Common myeloid progenitor, CD34-positive (primary cell): ENCODE measurements at regions of chr11 and their contacts with region 1.

Region 1: GRCh38 chr11:64304316-64305072 is 830 bp upstream of the ESRRA start:
- DNase-seq: peak; percentile 90 to 94 (median 91)
- H3K4me3 ChIP-seq: peak overlapping the region; percentile 52 to 92 (median 78)
- H3K27ac ChIP-seq: peak overlapping the region; percentile 40 to 82
- H3K4me1 ChIP-seq: peaks cover 7 to 44% (median 40%) of the 10 kb centered on the region in 4 experiments
- H3K27me3 ChIP-seq: peaks cover 0 to 20% (median 13%) of the 10 kb centered on the region in 5 experiments

Region 2: DNA sequence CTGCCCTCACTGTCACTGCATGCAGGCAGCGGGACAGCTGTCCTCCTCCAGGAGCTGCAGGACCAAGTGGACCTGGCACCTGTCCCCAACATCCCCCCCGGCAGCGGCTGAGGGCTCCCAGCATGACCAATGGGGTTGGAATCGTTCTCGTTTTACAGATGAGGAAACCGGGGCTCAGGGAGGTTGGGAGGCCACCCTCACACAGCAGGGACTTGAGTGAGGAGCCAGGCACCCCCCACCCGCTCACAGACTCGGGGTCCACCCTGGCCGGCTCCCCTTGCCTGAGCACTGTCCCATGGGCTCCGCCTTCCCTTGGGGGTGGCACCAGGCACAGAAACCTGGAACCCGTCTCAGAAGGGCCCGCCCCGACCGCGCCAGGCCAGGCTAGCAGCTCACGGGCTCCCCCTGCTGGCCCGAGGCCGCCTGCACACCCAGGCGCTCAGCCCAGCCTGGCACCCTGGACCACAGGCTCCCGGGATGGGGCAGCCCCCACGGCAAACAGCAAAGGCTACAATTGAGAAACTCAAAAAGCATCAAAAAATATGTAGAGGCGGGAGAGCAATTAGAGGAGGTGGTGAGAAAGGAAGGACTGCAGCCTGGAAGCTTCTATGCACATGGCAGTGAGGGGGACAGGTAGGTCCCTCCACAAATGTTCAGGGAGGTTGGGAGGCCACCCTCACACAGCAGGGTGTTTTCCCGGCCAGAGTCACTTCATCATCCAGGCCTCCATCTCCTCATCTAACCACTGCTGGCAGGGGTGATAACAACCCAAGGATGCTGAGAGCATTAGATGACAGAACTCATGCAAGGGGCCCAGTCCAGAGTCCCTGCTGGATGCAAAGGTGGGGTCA is 151.4 kb before region 1 on chr11:
- CTCF ChIA-PET with region 1: no interaction called
- POLR2A ChIA-PET with region 1: no interaction called
- DNase-seq: peak; percentile 31 to 61 (median 51)
- H3K4me3 ChIP-seq: no peak overlapping the region
- H3K27ac ChIP-seq: no peak overlapping the region
- H3K4me1 ChIP-seq: peaks cover 0 to 11% (median 4%) of the 10 kb centered on the region in 4 experiments
- H3K27me3 ChIP-seq: peaks cover 0 to 2% (median 0%) of the 10 kb centered on the region in 5 experiments

Region 3: GRCh38 chr11:64246871-64247728 is 57.4 kb before region 1 on chr11 and contains the start of gene PPP1R14B:
- CTCF ChIA-PET with region 1: interaction called, 37 read pairs
- POLR2A ChIA-PET with region 1: no interaction called
- DNase-seq: peak; percentile 73 to 87 (median 83)
- H3K4me3 ChIP-seq: peak within 1 kb of the TSS; percentile 52 to 98 (median 86)
- H3K27ac ChIP-seq: peak within 1 kb of the TSS in 1 of 2 experiments; percentile 75
- H3K4me1 ChIP-seq: peaks cover 2 to 79% (median 78%) of the 10 kb centered on the region in 4 experiments
- H3K27me3 ChIP-seq: no peaks in the 10 kb centered on the region

Region 4: GRCh38 chr11:64291752-64292459 is 12.6 kb before region 1 on chr11:
- CTCF ChIA-PET with region 1: interaction called, 45 read pairs
- POLR2A ChIA-PET with region 1: no interaction called
- DNase-seq: peak in 1 of 3 donors; percentile 40
- H3K4me3 ChIP-seq: peak overlapping the region; percentile 10 to 62 (median 48)
- H3K27ac ChIP-seq: no peak overlapping the region
- H3K4me1 ChIP-seq: peaks cover 0 to 17% (median 15%) of the 10 kb centered on the region in 4 experiments
- H3K27me3 ChIP-seq: peaks cover 14 to 75% (median 37%) of the 10 kb centered on the region in 5 experiments

Region 5: GRCh38 chr11:64331557-64332371 is 27.3 kb after region 1 on chr11:
- CTCF ChIA-PET with region 1: interaction called, 14 read pairs
- POLR2A ChIA-PET with region 1: interaction called, 7 read pairs
- DNase-seq: peak; percentile 94 to 98 (median 97)
- H3K4me3 ChIP-seq: peak overlapping the region in 3 of 7 experiments; percentile 8 to 36 (median 15)
- H3K27ac ChIP-seq: peak overlapping the region in 1 of 2 experiments; percentile 27
- H3K4me1 ChIP-seq: peaks cover 0 to 40% (median 20%) of the 10 kb centered on the region in 4 experiments
- H3K27me3 ChIP-seq: no peaks in the 10 kb centered on the region